ENCODE measurements at regions of chr7 and their contacts with region 1.

Region 1: DNA sequence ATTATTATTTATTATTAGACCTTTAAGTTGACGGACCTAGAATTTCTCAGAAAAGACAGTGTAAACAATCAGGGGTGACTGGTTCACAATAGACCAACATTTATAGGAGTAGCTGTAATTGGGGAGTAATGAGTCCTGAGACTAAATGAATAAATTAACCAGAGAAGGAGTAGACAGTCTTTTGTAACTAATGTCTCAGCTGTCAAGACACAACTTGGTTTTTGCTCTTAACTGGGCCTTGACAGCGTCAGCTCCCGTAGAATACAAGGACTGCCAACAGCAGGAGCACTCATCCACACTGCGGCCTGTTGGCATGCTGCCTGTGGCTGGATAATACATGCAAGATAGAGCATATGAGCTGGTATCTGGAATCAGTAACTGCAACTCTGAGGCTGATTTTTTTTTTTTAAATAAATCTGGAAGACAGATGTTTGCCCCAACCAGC is 123.9 kb downstream of the CACNA2D1 start:
- DNase-seq: no peak
- ATAC-seq: no peak
- H3K4me3 ChIP-seq: no peak overlapping the region
- H3K4me3 Mint-ChIP-seq: no peak overlapping the region
- H3K27ac ChIP-seq: no peak overlapping the region
- H3K27ac Mint-ChIP-seq: no peak overlapping the region
- H3K4me1 ChIP-seq: no peaks in the 10 kb centered on the region
- H3K4me1 Mint-ChIP-seq: no peaks in the 10 kb centered on the region
- H3K27me3 ChIP-seq: no peaks in the 10 kb centered on the region
- H3K27me3 Mint-ChIP-seq: no peaks in the 10 kb centered on the region
- CTCF ChIP-seq: no peak

Region 2: DNA sequence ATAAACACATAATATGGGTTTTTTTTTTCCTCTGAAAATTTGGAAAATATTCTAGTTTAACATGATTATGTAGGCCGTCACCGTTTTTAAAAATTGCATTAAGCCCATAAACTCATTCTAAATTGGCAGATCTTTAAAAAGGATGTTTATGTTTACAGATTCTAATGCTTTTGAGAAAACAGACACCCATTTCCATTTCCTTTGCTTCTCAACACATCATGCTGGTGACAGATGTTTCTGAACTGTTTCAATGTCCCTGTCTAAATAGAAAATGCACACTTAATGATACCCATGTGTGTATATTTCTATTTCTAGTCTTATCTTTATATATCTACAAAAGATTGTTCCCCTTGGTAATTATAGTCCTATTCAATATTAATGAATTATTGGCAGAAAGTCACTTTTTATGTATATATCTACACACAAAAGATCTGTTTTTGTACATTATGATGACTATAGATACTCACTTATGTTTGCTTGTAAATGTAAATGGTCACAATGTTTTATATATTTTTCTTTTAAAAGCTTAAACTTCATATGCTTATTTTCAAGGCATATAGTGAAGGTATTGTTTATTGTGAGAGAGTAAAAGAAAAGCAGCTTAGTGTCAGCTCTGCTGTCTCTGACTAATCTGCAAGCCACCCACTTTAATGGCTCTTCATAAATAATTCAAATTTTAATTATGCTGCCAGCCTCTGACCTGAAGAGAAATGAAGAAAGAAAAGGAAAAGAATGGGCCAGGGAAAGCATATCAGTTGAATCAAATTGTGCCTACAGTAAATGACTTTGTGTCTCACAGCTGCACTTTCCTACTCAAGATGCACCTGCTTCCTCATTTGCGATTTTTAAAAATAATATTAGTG is 55.5 kb before region 1 on chr7:
- CTCF ChIA-PET with region 1: no interaction called
- POLR2A ChIA-PET with region 1: no interaction called
- intact Hi-C with region 1: loop called in 1 of 2 experiments (anchors 10 kb)
- DNase-seq: no peak
- ATAC-seq: no peak
- H3K4me3 ChIP-seq: no peak overlapping the region
- H3K4me3 Mint-ChIP-seq: no peak overlapping the region
- H3K27ac ChIP-seq: no peak overlapping the region
- H3K27ac Mint-ChIP-seq: no peak overlapping the region
- H3K4me1 ChIP-seq: no peaks in the 10 kb centered on the region
- H3K4me1 Mint-ChIP-seq: no peaks in the 10 kb centered on the region
- H3K27me3 ChIP-seq: no peaks in the 10 kb centered on the region
- H3K27me3 Mint-ChIP-seq: no peaks in the 10 kb centered on the region
- CTCF ChIP-seq: no peak

Region 3: GRCh38 chr7:82443547-82444219 is 124.0 kb after region 1 on chr7 and contains the start of gene CACNA2D1:
- CTCF ChIA-PET with region 1: no interaction called
- POLR2A ChIA-PET with region 1: no interaction called
- intact Hi-C with region 1: no loop called
- DNase-seq: no peak
- ATAC-seq: no peak
- H3K4me3 ChIP-seq: no peak within 1 kb of the TSS
- H3K4me3 Mint-ChIP-seq: peak within 1 kb of the TSS; percentile 34
- H3K27ac ChIP-seq: no peak within 1 kb of the TSS
- H3K27ac Mint-ChIP-seq: no peak within 1 kb of the TSS
- H3K4me1 ChIP-seq: peaks cover 2% of the 10 kb centered on the region
- H3K4me1 Mint-ChIP-seq: peaks cover 3% of the 10 kb centered on the region
- H3K27me3 ChIP-seq: peaks cover 24 to 30% of the 10 kb centered on the region in 2 experiments
- H3K27me3 Mint-ChIP-seq: peaks cover 46% of the 10 kb centered on the region
- CTCF ChIP-seq: no peak
- total RNA-seq, gene CACNA2D1: not detected